Activated B cell treated with CpG ODN at 0.5 μM for 24 hours (primary cell): ENCODE measurements at regions of chr13 and their contacts with region 1.

Region 1: GRCh38 chr13:32315238-32316027 is at the starts of genes BRCA2 and ZAR1L:
- DNase-seq: peak; percentile 80
- ATAC-seq: peak; percentile 88
- H3K4me3 Mint-ChIP-seq: peak within 1 kb of the TSS; percentile 94
- H3K27ac Mint-ChIP-seq: peak within 1 kb of the TSS; percentile 100
- H3K4me1 Mint-ChIP-seq: peaks cover 14% of the 10 kb centered on the region
- H3K27me3 Mint-ChIP-seq: no peaks in the 10 kb centered on the region
- CTCF ChIP-seq: no peak
- total RNA-seq, gene BRCA2: 4.5 and 6.6 TPM in 2 replicates
- total RNA-seq, gene ZAR1L: not detected in 2 replicates

Region 2: GRCh38 chr13:31775686-31776085 is 539.7 kb before region 1 on chr13:
- CTCF ChIA-PET with region 1: no interaction called
- POLR2A ChIA-PET with region 1: no interaction called
- intact Hi-C with region 1: no loop called
- DNase-seq: no peak
- ATAC-seq: no peak
- H3K4me3 Mint-ChIP-seq: no peak overlapping the region
- H3K27ac Mint-ChIP-seq: no peak overlapping the region
- H3K4me1 Mint-ChIP-seq: peaks cover 4% of the 10 kb centered on the region
- H3K27me3 Mint-ChIP-seq: peaks cover 6% of the 10 kb centered on the region
- CTCF ChIP-seq: no peak

Region 3: GRCh38 chr13:31846182-31846950 is 469.1 kb before region 1 on chr13:
- CTCF ChIA-PET with region 1: no interaction called
- POLR2A ChIA-PET with region 1: interaction called, 5 read pairs
- intact Hi-C with region 1: loop called (anchors 2 kb)
- DNase-seq: peak; percentile 80
- ATAC-seq: peak; percentile 98
- H3K4me3 Mint-ChIP-seq: peak overlapping the region; percentile 83
- H3K27ac Mint-ChIP-seq: no peak overlapping the region
- H3K4me1 Mint-ChIP-seq: peaks cover 9% of the 10 kb centered on the region
- H3K27me3 Mint-ChIP-seq: peaks cover 27% of the 10 kb centered on the region
- CTCF ChIP-seq: no peak

Region 4: DNA sequence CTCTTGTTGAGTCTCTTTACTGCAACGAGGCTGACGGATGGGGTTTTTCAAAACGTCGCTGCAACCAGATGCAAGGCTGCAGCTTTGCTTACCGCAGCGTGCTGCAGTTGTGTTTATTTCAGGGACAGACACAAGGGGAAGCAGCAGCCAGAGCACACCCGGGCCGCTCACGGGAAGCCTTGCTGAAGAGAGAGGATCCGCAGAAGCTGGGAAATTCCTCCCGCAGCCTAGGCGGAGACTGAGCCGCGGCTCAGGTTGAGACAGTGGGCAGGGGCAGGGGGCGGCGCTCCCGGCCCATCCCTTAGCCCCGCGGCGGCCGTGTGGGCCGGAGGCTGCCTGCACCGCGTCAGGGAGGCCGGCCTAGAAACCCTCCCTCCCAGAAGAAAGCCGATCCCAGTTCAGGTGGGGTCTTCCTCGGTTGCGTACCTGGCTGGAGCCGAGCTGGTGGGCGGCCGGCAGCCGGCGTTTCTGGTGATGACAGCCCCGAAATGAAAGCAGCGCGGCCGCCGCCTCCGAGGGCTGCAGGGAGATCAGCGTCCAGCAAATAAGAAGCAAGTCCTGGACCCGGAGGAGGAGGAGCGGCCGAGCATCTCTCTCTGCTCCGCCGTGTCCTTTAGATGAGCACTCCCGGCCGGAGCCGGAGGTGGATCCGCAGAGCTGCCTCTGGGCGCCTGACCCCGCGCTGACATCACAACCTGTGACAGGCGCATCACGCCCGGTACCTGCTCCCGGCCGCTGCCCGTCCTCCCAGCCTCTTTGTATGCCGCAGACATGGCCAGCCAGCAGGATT is 284.2 kb before region 1 on chr13 and contains the start of gene FRY:
- CTCF ChIA-PET with region 1: no interaction called
- POLR2A ChIA-PET with region 1: interaction called, 13 read pairs
- intact Hi-C with region 1: loop called (anchors 5 kb)
- DNase-seq: peak; percentile 42
- ATAC-seq: peak; percentile 75
- H3K4me3 Mint-ChIP-seq: peak within 1 kb of the TSS; percentile 94
- H3K27ac Mint-ChIP-seq: peak within 1 kb of the TSS; percentile 61
- H3K4me1 Mint-ChIP-seq: peaks cover 26% of the 10 kb centered on the region
- H3K27me3 Mint-ChIP-seq: peaks cover 7% of the 10 kb centered on the region
- CTCF ChIP-seq: no peak
- total RNA-seq, gene FRY: 4.7 and 4.8 TPM in 2 replicates

Region 5: GRCh38 chr13:32650705-32651311 is 335.4 kb after region 1 on chr13:
- CTCF ChIA-PET with region 1: no interaction called
- POLR2A ChIA-PET with region 1: interaction called, 3 read pairs
- intact Hi-C with region 1: loop called (anchors 5 kb)
- DNase-seq: no peak
- ATAC-seq: peak; percentile 85
- H3K4me3 Mint-ChIP-seq: no peak overlapping the region
- H3K27ac Mint-ChIP-seq: no peak overlapping the region
- H3K4me1 Mint-ChIP-seq: peaks cover 54% of the 10 kb centered on the region
- H3K27me3 Mint-ChIP-seq: no peaks in the 10 kb centered on the region
- CTCF ChIP-seq: peak; percentile 78